HEK293 (cell line): ENCODE measurements at regions of chr19 and their contacts with region 1.

Region 1: GRCh38 chr19:13060964-13061927 is 41.4 kb downstream of the LYL1 start:
- H3K4me3 ChIP-seq: no peak overlapping the region
- H3K27ac ChIP-seq: no peak overlapping the region
- H3K4me1 ChIP-seq: peaks cover 25% of the 10 kb centered on the region
- CTCF ChIP-seq: peak; percentile 90

Region 2: GRCh38 chr19:12983542-12984142 is 77.6 kb before region 1 on chr19:
- CTCF ChIA-PET with region 1: interaction called, 140 read pairs
- POLR2A ChIA-PET with region 1: interaction called, 3 read pairs
- H3K4me3 ChIP-seq: peak overlapping the region; percentile 16
- H3K27ac ChIP-seq: no peak overlapping the region
- H3K4me1 ChIP-seq: no peaks in the 10 kb centered on the region
- CTCF ChIP-seq: peak; percentile 96

Region 3: DNA sequence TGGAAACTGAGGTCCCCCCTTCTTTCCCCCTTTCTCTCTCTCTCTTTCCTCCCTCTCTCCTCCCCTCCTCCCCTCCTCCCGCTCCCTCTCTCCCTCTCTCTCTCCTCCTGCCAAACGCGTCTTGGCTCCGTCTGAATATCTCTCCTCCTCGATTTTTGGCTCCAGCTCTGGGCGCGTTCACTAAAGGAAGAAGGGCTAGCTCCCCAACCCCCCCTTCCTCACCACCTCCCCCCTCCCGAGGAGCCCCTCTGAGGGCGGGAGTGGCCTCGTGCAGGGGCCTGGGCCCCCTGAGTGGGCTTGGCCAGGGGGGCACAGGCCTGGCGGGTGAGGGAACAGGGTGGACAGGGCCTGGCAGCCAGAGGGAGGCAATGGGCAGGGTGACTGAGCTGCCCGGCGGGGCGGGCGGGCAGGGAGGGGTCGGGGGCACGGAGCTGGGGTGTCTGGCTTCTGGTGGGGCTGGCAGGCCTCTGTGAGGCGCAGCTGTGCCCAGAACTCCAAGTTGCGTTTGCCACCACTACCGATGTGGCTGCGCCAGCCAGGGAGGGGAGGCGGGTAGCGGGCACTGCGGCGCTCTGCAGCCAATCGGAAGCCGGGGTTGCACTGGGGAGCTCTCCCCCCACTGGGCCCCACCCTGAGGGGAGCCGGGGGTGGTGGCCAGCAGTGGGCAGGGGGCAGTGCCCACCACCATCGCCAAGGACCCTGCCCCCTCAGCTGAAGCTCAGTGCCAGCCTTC is 58.9 kb before region 1 on chr19:
- CTCF ChIA-PET with region 1: interaction called, 21 read pairs
- POLR2A ChIA-PET with region 1: interaction called, 4 read pairs
- H3K4me3 ChIP-seq: no peak overlapping the region
- H3K27ac ChIP-seq: no peak overlapping the region
- H3K4me1 ChIP-seq: no peaks in the 10 kb centered on the region
- CTCF ChIP-seq: no peak

Region 4: GRCh38 chr19:13033819-13034611 is 27.2 kb before region 1 on chr19:
- CTCF ChIA-PET with region 1: interaction called, 247 read pairs
- POLR2A ChIA-PET with region 1: interaction called, 4 read pairs
- H3K4me3 ChIP-seq: no peak overlapping the region
- H3K27ac ChIP-seq: no peak overlapping the region
- H3K4me1 ChIP-seq: peaks cover 29% of the 10 kb centered on the region
- CTCF ChIP-seq: peak; percentile 76

Region 5: DNA sequence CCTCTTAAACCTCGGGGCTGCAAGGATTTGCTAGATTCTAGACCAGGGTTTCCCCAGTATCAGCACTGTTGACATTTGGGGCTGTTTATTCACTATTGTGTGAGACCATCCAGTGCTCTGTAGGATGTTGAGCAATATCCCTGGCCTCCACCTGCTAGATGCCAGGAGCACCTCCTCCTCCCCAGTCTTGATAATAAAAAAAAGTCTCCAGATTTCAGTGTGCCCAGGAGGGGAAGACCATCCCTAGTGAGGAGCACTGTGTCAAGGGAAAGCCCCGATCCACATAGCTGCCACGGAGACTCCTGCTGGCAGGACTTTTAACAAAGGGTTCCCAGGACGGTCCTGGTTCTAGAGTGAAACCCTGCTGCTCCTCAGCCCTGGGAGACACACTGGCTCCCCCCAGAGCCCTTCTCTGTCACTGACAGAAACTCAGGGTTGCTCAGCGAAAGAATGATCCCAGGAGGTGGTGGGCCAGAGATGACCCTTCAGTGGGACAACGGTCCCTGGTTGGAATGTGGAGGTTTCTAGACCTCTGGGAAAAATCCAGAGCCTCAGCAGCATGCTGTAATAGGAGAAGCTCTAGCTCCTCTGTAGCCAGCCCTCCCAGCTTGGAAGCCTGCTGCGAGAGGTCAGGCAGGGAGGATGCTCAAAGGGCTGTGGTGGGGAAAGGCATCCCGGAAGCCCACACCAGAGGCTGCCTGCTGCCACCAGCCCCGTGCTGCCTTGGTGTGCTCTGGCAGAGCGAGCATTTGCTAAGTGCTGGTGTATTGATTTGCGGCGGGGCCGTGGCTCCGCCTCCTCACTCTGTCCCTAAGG is 21.2 kb after region 1 on chr19:
- CTCF ChIA-PET with region 1: interaction called, 41 read pairs
- POLR2A ChIA-PET with region 1: interaction called, 6 read pairs
- H3K4me3 ChIP-seq: no peak overlapping the region
- H3K27ac ChIP-seq: no peak overlapping the region
- H3K4me1 ChIP-seq: peaks cover 14% of the 10 kb centered on the region
- CTCF ChIP-seq: peak; percentile 18; the same call in 1 of the 2 replicates

Region 6: GRCh38 chr19:13476071-13476470 is 414.8 kb after region 1 on chr19:
- CTCF ChIA-PET with region 1: no interaction called
- POLR2A ChIA-PET with region 1: no interaction called
- H3K4me3 ChIP-seq: no peak overlapping the region
- H3K27ac ChIP-seq: no peak overlapping the region
- H3K4me1 ChIP-seq: no peaks in the 10 kb centered on the region
- CTCF ChIP-seq: no peak